ENCODE measurements at regions of chr6 and their contacts with region 1.

Region 1: DNA sequence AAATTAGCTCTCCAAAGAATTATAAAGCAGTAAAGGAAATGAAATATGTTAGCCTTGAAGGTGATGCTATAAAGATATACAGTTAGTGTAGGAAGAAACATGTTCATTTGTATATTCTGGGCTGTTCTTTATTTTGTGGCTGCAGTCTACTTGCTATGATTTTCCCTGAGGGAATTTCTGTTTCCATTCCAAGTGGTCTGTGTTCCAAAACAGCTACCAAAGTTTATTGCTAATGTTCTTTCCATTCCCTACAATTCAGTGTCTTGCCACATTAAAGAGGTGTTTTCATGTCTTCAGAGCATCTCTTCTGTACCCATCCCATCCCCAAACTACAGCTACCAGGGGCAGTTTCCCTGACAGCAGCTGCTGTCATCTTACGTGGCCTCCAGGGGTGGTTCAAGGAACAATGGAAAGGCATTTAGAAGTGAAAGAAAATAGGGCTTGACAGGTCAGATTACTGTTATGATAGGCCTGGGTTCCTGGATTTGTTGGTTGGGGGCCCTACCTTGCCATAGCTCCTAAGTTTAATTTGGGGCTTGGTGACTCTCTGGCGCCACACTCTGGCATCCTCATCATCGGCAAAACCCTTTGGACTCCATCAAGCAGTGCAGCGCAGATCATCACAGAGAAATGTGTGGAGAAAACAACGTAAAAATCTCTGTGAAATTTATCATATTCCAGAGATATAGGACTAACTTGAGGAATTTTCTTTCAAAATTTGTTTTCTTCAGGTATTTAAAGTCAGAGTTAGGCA is 33.8 kb upstream of the AIG1 start:
- DNase-seq: peak in 7 of 9 donors; percentile 3 to 47 (median 34)
- ATAC-seq: peak; percentile 76
- H3K4me3 ChIP-seq: no peak overlapping the region
- H3K4me3 Mint-ChIP-seq: no peak overlapping the region
- H3K27ac ChIP-seq: no peak overlapping the region
- H3K27ac Mint-ChIP-seq: peak overlapping the region in 3 of 9 donors; percentile 28 to 76 (median 53)
- H3K4me1 ChIP-seq: no peaks in the 10 kb centered on the region
- H3K4me1 Mint-ChIP-seq: peaks cover 0 to 5% (median 0%) of the 10 kb centered on the region in 7 donors
- H3K27me3 ChIP-seq: no peaks in the 10 kb centered on the region
- H3K27me3 Mint-ChIP-seq: no peaks in the 10 kb centered on the region

Region 2: GRCh38 chr6:142361782-142362750 is 664.8 kb before region 1 on chr6:
- CTCF ChIA-PET with region 1: no interaction called
- POLR2A ChIA-PET with region 1: no interaction called
- intact Hi-C with region 1: no loop called
- DNase-seq: no peak
- ATAC-seq: no peak
- H3K4me3 ChIP-seq: no peak overlapping the region
- H3K4me3 Mint-ChIP-seq: no peak overlapping the region
- H3K27ac ChIP-seq: no peak overlapping the region
- H3K27ac Mint-ChIP-seq: no peak overlapping the region
- H3K4me1 ChIP-seq: no peaks in the 10 kb centered on the region
- H3K4me1 Mint-ChIP-seq: peaks cover 0 to 2% (median 0%) of the 10 kb centered on the region in 7 donors
- H3K27me3 ChIP-seq: no peaks in the 10 kb centered on the region
- H3K27me3 Mint-ChIP-seq: peaks cover 0 to 14% (median 9%) of the 10 kb centered on the region in 5 donors

Region 3: GRCh38 chr6:142952614-142953013 is 74.3 kb before region 1 on chr6:
- CTCF ChIA-PET with region 1: interaction called, 3 read pairs
- POLR2A ChIA-PET with region 1: no interaction called
- intact Hi-C with region 1: loop called in 1 of 2 experiments (anchors 2 kb)
- DNase-seq: no peak
- ATAC-seq: peak; percentile 26
- H3K4me3 ChIP-seq: no peak overlapping the region
- H3K4me3 Mint-ChIP-seq: no peak overlapping the region
- H3K27ac ChIP-seq: peak overlapping the region; percentile 23
- H3K27ac Mint-ChIP-seq: peak overlapping the region in 8 of 9 donors; percentile 17 to 94 (median 76)
- H3K4me1 ChIP-seq: no peaks in the 10 kb centered on the region
- H3K4me1 Mint-ChIP-seq: peaks cover 15 to 46% (median 29%) of the 10 kb centered on the region in 7 donors
- H3K27me3 ChIP-seq: no peaks in the 10 kb centered on the region
- H3K27me3 Mint-ChIP-seq: peaks cover 0 to 4% (median 0%) of the 10 kb centered on the region in 5 donors

Region 4: DNA sequence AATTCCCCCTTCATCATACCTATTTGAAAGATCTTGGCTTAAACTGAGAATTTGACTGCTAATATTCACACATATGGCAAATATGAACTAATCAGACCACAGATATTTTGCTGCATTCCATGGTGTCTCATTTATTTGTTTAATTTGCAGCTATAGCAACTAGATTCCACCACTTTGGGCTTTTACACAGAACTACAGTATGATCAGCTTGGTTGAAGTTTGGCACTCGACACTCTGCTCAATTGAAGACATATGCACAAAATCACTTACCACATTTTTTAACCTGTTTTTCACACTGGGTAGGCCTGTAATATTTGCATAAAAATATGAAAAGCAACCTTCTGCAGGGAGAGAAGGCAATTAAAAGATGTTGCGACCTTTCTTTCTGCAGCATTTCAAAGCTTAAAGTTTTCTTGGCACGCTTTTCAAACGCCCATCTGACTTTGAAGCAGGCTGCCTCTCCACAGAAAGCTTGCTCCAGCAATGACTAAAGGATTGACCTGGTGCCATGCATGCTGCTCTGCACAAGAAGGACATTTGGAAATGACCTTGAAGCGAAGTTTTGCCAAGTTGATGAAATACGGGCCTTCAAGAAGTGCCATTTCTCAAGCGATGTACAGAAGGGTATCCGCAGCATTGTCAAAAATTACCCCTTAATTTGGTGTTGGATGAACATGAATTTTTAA is 160.5 kb after region 1 on chr6:
- CTCF ChIA-PET with region 1: no interaction called
- POLR2A ChIA-PET with region 1: no interaction called
- intact Hi-C with region 1: no loop called
- DNase-seq: no peak
- ATAC-seq: no peak
- H3K4me3 ChIP-seq: no peak overlapping the region
- H3K4me3 Mint-ChIP-seq: no peak overlapping the region
- H3K27ac ChIP-seq: no peak overlapping the region
- H3K27ac Mint-ChIP-seq: no peak overlapping the region
- H3K4me1 ChIP-seq: no peaks in the 10 kb centered on the region
- H3K4me1 Mint-ChIP-seq: peaks cover 0 to 4% (median 0%) of the 10 kb centered on the region in 7 donors
- H3K27me3 ChIP-seq: no peaks in the 10 kb centered on the region
- H3K27me3 Mint-ChIP-seq: no peaks in the 10 kb centered on the region

Region 5: DNA sequence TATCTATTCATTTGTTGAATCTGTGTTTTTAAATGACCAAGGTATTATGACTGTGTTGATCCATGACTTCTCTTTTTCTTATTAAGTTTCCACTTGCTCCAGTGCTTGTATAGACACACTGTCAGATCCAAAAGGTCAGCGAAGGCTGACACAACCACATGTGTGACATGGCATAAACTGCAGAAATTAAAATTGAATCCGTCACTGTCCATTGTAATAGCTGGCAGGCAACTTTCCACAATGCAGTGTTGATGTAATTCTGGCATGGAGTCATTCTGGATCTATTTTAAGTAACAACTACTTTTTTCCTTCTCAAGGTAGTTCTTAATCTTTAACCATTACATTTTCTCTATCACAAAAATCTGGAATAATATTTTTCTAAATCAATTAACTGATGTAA is 179.1 kb after region 1 on chr6:
- CTCF ChIA-PET with region 1: no interaction called
- POLR2A ChIA-PET with region 1: no interaction called
- intact Hi-C with region 1: no loop called
- DNase-seq: no peak
- ATAC-seq: no peak
- H3K4me3 ChIP-seq: no peak overlapping the region
- H3K4me3 Mint-ChIP-seq: no peak overlapping the region
- H3K27ac ChIP-seq: no peak overlapping the region
- H3K27ac Mint-ChIP-seq: no peak overlapping the region
- H3K4me1 ChIP-seq: no peaks in the 10 kb centered on the region
- H3K4me1 Mint-ChIP-seq: no peaks in the 10 kb centered on the region
- H3K27me3 ChIP-seq: no peaks in the 10 kb centered on the region
- H3K27me3 Mint-ChIP-seq: no peaks in the 10 kb centered on the region

Measured in naive thymus-derived CD4-positive, alpha-beta T cell (primary cell).